ENCODE measurements at regions of chr2 and their contacts with region 1.

Region 1: GRCh38 chr2:200703127-200703925 is 108.4 kb upstream of the BZW1 start:
- DNase-seq: peak; percentile 81 to 90 (median 86)
- H3K4me3 ChIP-seq: no peak overlapping the region
- H3K27ac ChIP-seq: no peak overlapping the region
- H3K4me1 ChIP-seq: peaks cover 3 to 34% (median 11%) of the 10 kb centered on the region in 4 experiments
- H3K27me3 ChIP-seq: no peaks in the 10 kb centered on the region

Region 2: GRCh38 chr2:200442471-200442870 is 260.9 kb before region 1 on chr2:
- CTCF ChIA-PET with region 1: no interaction called
- POLR2A ChIA-PET with region 1: no interaction called
- DNase-seq: no peak
- H3K4me3 ChIP-seq: no peak overlapping the region
- H3K27ac ChIP-seq: no peak overlapping the region
- H3K4me1 ChIP-seq: no peaks in the 10 kb centered on the region
- H3K27me3 ChIP-seq: no peaks in the 10 kb centered on the region

Region 3: DNA sequence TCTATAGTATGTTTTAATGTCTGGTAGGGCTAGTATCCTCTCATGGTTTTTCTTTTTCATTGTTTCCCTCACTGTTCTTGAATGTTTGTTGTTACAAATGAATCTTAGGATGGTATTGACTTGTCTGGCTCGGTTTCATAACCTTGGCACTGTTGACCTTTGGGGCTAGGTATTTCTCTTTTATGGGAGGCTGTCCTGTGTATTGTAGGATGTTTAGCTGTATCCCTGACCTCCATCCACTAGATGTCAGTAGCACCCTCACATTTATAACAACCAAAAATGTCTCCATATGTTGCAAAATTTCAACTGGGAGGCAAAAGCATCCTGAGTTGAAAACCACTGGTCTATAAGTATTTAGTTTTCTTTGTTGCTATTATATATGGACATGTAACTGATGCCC is 124.5 kb before region 1 on chr2:
- CTCF ChIA-PET with region 1: interaction called, 11 read pairs
- POLR2A ChIA-PET with region 1: no interaction called
- DNase-seq: peak; percentile 38 to 72 (median 64)
- H3K4me3 ChIP-seq: no peak overlapping the region
- H3K27ac ChIP-seq: no peak overlapping the region
- H3K4me1 ChIP-seq: no peaks in the 10 kb centered on the region
- H3K27me3 ChIP-seq: no peaks in the 10 kb centered on the region

Region 4: GRCh38 chr2:200618587-200619021 is 84.7 kb before region 1 on chr2:
- CTCF ChIA-PET with region 1: interaction called, 115 read pairs
- POLR2A ChIA-PET with region 1: interaction called, 4 read pairs
- DNase-seq: peak; percentile 52 to 69 (median 59)
- H3K4me3 ChIP-seq: no peak overlapping the region
- H3K27ac ChIP-seq: no peak overlapping the region
- H3K4me1 ChIP-seq: peaks cover 0 to 20% (median 8%) of the 10 kb centered on the region in 4 experiments
- H3K27me3 ChIP-seq: no peaks in the 10 kb centered on the region

Region 5: GRCh38 chr2:200901459-200902072 is 198.2 kb after region 1 on chr2:
- CTCF ChIA-PET with region 1: no interaction called
- POLR2A ChIA-PET with region 1: no interaction called
- DNase-seq: peak; percentile 92 to 96 (median 94)
- H3K4me3 ChIP-seq: no peak overlapping the region
- H3K27ac ChIP-seq: no peak overlapping the region
- H3K4me1 ChIP-seq: peaks cover 0 to 4% (median 0%) of the 10 kb centered on the region in 4 experiments
- H3K27me3 ChIP-seq: no peaks in the 10 kb centered on the region